CD8-positive, alpha-beta memory T cell (primary cell): ENCODE measurements at regions of chr6 and their contacts with region 1.

Region 1: GRCh38 chr6:27838058-27838944 is 73.9 kb downstream of the OR2B2 start:
- DNase-seq: peak; percentile 67 to 93 (median 92)
- H3K4me3 ChIP-seq: peak overlapping the region; percentile 71
- H3K4me3 Mint-ChIP-seq: no peak overlapping the region
- H3K27ac ChIP-seq: peak overlapping the region; percentile 99
- H3K27ac Mint-ChIP-seq: no peak overlapping the region
- H3K4me1 ChIP-seq: peaks cover 30% of the 10 kb centered on the region
- H3K4me1 Mint-ChIP-seq: peaks cover 12 to 23% (median 19%) of the 10 kb centered on the region in 3 donors
- H3K27me3 ChIP-seq: no peaks in the 10 kb centered on the region
- H3K27me3 Mint-ChIP-seq: peaks cover 5 to 13% of the 10 kb centered on the region in 2 donors

Region 2: DNA sequence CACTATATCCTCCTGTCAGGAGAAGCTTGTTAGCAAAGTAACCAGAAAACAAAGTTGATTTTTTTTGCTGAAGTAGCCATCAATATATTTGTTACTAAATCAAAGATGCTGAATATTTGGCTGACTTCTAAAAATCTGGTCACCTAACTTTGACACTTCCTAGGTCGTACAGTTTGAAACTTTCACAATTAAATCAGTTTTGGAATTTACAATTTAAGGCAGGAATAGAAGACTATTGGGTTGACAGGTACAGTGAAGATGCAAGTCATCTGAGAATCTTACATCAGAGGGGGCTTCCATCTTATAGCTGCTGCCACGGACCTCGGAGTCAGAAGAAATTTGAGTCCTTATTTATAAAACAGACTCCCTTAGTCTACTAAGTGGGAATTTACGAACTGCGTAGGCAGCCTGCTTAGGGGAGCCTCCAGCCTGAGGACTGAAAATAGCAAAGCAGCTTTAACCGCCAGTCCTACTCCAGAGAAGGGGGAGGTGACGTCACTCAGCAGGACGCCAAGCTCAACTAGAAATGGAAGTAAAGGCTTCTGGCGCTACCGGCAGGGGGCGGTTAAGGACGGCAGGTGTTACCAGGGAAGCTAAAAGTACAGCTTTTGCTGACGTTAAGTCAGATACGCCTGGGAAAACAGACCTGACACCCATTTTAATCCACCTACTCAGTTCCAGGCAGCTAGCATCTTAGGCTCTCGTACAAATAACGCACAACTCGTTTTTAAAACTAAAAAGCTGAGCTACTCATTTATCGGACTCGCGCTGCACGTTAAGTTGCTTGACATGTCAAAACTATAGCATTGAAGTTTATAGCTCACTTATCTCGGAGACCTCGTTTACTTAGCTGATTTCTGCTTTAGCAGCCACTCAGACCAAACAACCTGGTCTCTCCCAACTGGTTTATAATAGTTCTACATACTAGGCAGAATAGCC is 1812.1 kb before region 1 on chr6:
- CTCF ChIA-PET with region 1: interaction called, 3 read pairs
- POLR2A ChIA-PET with region 1: interaction called, 19 read pairs
- DNase-seq: peak; percentile 86 to 95 (median 94)
- H3K4me3 ChIP-seq: peak overlapping the region; percentile 59
- H3K4me3 Mint-ChIP-seq: peak overlapping the region; percentile 85 to 95 (median 93)
- H3K27ac ChIP-seq: peak overlapping the region; percentile 86
- H3K27ac Mint-ChIP-seq: peak overlapping the region; percentile 93 to 100 (median 98)
- H3K4me1 ChIP-seq: peaks cover 21% of the 10 kb centered on the region
- H3K4me1 Mint-ChIP-seq: peaks cover 30 to 77% (median 55%) of the 10 kb centered on the region in 3 donors
- H3K27me3 ChIP-seq: no peaks in the 10 kb centered on the region
- H3K27me3 Mint-ChIP-seq: peaks cover 0 to 9% of the 10 kb centered on the region in 2 donors

Region 3: DNA sequence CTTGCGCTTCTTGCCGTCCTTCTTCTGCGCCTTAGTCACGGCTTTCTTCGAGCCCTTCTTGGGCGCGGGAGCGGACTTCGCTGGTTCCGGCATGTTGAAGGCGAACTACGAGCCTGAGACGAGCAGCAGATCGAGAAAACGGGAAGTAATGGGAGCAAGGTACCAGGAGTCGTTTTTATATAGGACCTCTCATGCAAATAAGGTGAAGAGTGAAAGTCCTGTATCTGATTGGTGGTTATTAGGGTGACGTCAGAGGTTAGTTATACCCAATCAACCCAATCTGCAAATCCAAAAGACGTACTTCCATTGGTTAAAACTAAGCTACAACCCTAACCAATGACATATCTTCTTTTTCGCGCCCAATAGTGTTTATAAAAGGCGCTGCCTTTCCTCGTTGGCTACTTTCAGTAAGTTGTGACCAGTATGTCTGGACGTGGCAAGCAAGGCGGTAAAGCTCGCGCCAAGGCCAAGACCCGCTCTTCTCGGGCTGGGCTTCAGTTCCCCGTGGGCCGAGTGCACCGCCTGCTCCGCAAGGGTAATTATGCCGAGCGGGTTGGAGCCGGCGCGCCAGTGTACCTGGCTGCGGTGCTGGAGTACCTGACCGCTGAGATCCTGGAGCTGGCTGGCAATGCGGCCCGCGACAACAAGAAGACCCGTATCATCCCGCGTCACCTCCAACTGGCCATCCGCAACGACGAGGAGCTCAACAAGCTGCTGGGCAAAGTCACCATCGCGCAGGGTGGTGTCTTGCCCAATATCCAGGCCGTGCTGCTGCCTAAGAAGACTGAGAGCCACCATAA is 691.4 kb before region 1 on chr6:
- CTCF ChIA-PET with region 1: interaction called, 5 read pairs
- POLR2A ChIA-PET with region 1: interaction called, 39 read pairs
- DNase-seq: peak; percentile 42 to 93 (median 89)
- H3K4me3 ChIP-seq: peak overlapping the region; percentile 97
- H3K4me3 Mint-ChIP-seq: no peak overlapping the region
- H3K27ac ChIP-seq: peak overlapping the region; percentile 91
- H3K27ac Mint-ChIP-seq: no peak overlapping the region
- H3K4me1 ChIP-seq: peaks cover 20% of the 10 kb centered on the region
- H3K4me1 Mint-ChIP-seq: peaks cover 7 to 21% (median 10%) of the 10 kb centered on the region in 3 donors
- H3K27me3 ChIP-seq: no peaks in the 10 kb centered on the region
- H3K27me3 Mint-ChIP-seq: no peaks in the 10 kb centered on the region

Region 4: GRCh38 chr6:27809939-27810767 is 28.1 kb before region 1 on chr6:
- CTCF ChIA-PET with region 1: interaction called, 76 read pairs
- POLR2A ChIA-PET with region 1: interaction called, 245 read pairs
- DNase-seq: peak; percentile 64 to 93 (median 88)
- H3K4me3 ChIP-seq: peak overlapping the region; percentile 78
- H3K4me3 Mint-ChIP-seq: peak overlapping the region; percentile 85 to 97 (median 94)
- H3K27ac ChIP-seq: peak overlapping the region; percentile 93
- H3K27ac Mint-ChIP-seq: peak overlapping the region; percentile 94 to 100 (median 97)
- H3K4me1 ChIP-seq: peaks cover 38% of the 10 kb centered on the region
- H3K4me1 Mint-ChIP-seq: peaks cover 54 to 69% (median 65%) of the 10 kb centered on the region in 3 donors
- H3K27me3 ChIP-seq: no peaks in the 10 kb centered on the region
- H3K27me3 Mint-ChIP-seq: peaks cover 0 to 6% of the 10 kb centered on the region in 2 donors

Region 5: GRCh38 chr6:27851440-27851839 is 13.1 kb after region 1 on chr6:
- CTCF ChIA-PET with region 1: interaction called, 8 read pairs
- POLR2A ChIA-PET with region 1: interaction called, 12 read pairs
- DNase-seq: no peak
- H3K4me3 ChIP-seq: no peak overlapping the region
- H3K4me3 Mint-ChIP-seq: no peak overlapping the region
- H3K27ac ChIP-seq: no peak overlapping the region
- H3K27ac Mint-ChIP-seq: no peak overlapping the region
- H3K4me1 ChIP-seq: no peaks in the 10 kb centered on the region
- H3K4me1 Mint-ChIP-seq: no peaks in the 10 kb centered on the region
- H3K27me3 ChIP-seq: no peaks in the 10 kb centered on the region
- H3K27me3 Mint-ChIP-seq: peaks cover 0 to 8% of the 10 kb centered on the region in 2 donors

Region 6: DNA sequence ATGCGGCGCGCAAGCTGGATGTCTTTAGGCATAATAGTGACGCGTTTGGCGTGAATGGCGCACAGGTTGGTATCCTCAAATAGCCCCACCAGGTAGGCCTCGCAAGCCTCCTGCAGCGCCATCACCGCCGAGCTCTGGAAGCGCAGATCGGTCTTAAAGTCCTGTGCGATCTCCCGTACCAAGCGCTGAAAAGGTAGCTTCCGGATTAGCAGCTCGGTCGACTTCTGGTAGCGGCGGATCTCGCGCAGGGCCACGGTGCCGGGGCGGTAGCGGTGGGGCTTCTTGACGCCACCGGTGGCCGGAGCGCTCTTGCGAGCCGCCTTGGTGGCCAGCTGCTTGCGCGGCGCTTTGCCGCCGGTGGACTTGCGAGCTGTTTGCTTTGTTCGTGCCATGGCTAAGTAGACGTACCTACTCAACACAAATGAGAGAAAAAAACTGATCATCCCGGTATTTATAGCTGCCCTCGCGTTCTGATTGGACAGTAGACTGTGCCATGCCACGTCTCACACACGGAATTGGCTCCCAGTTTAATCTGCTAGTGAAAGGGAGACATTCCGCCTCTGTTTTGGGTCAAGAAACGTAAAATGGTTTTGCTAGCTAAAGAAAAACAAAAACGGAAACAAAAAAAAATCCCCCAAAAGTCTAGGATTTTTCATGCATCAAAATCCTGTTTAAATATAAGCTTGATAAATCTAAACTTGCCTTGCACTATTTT is 33.8 kb after region 1 on chr6:
- CTCF ChIA-PET with region 1: interaction called, 168 read pairs
- POLR2A ChIA-PET with region 1: interaction called, 227 read pairs
- DNase-seq: peak; percentile 69 to 95 (median 91)
- H3K4me3 ChIP-seq: peak overlapping the region; percentile 71
- H3K4me3 Mint-ChIP-seq: peak overlapping the region; percentile 82 to 95 (median 88)
- H3K27ac ChIP-seq: peak overlapping the region; percentile 71
- H3K27ac Mint-ChIP-seq: peak overlapping the region; percentile 90 to 99 (median 94)
- H3K4me1 ChIP-seq: peaks cover 24% of the 10 kb centered on the region
- H3K4me1 Mint-ChIP-seq: peaks cover 31 to 39% (median 37%) of the 10 kb centered on the region in 3 donors
- H3K27me3 ChIP-seq: no peaks in the 10 kb centered on the region
- H3K27me3 Mint-ChIP-seq: peaks cover 0 to 3% of the 10 kb centered on the region in 2 donors